Activated CD8-positive, alpha-beta memory T cell treated with anti-CD3 and anti-CD28 coated beads, Interleukin-2, amount 10 ng/mL, durations not matched to agents 7 days and 5 days (primary cell): ENCODE measurements at regions of chr19 and their contacts with region 1.

Region 1: GRCh38 chr19:17623224-17623935 is 64.8 kb downstream of the UNC13A start:
- DNase-seq: no peak
- ATAC-seq: no peak
- H3K4me3 Mint-ChIP-seq: no peak overlapping the region
- H3K27ac Mint-ChIP-seq: no peak overlapping the region
- H3K4me1 Mint-ChIP-seq: peaks cover 18% of the 10 kb centered on the region
- H3K27me3 Mint-ChIP-seq: peaks cover 6% of the 10 kb centered on the region

Region 2: GRCh38 chr19:17590877-17591276 is 32.5 kb before region 1 on chr19:
- CTCF ChIA-PET with region 1: interaction called, 13 read pairs
- DNase-seq: no peak
- ATAC-seq: peak; percentile 42
- H3K4me3 Mint-ChIP-seq: no peak overlapping the region
- H3K27ac Mint-ChIP-seq: no peak overlapping the region
- H3K4me1 Mint-ChIP-seq: peaks cover 7% of the 10 kb centered on the region
- H3K27me3 Mint-ChIP-seq: peaks cover 19% of the 10 kb centered on the region

Region 3: GRCh38 chr19:17633700-17634099 is 10.3 kb after region 1 on chr19:
- CTCF ChIA-PET with region 1: no interaction called
- DNase-seq: no peak
- ATAC-seq: no peak
- H3K4me3 Mint-ChIP-seq: no peak overlapping the region
- H3K27ac Mint-ChIP-seq: no peak overlapping the region
- H3K4me1 Mint-ChIP-seq: no peaks in the 10 kb centered on the region
- H3K27me3 Mint-ChIP-seq: no peaks in the 10 kb centered on the region

Region 4: GRCh38 chr19:17794731-17795536 is 171.6 kb after region 1 on chr19 and contains the start of gene B3GNT3:
- CTCF ChIA-PET with region 1: no interaction called
- DNase-seq: no peak
- ATAC-seq: no peak
- H3K4me3 Mint-ChIP-seq: no peak within 1 kb of the TSS
- H3K27ac Mint-ChIP-seq: no peak within 1 kb of the TSS
- H3K4me1 Mint-ChIP-seq: peaks cover 39% of the 10 kb centered on the region
- H3K27me3 Mint-ChIP-seq: peaks cover 26% of the 10 kb centered on the region
- total RNA-seq, gene B3GNT3: not detected